GM12878 (cell line): ENCODE measurements at regions of chr9 and their contacts with region 1.

Region 1: DNA sequence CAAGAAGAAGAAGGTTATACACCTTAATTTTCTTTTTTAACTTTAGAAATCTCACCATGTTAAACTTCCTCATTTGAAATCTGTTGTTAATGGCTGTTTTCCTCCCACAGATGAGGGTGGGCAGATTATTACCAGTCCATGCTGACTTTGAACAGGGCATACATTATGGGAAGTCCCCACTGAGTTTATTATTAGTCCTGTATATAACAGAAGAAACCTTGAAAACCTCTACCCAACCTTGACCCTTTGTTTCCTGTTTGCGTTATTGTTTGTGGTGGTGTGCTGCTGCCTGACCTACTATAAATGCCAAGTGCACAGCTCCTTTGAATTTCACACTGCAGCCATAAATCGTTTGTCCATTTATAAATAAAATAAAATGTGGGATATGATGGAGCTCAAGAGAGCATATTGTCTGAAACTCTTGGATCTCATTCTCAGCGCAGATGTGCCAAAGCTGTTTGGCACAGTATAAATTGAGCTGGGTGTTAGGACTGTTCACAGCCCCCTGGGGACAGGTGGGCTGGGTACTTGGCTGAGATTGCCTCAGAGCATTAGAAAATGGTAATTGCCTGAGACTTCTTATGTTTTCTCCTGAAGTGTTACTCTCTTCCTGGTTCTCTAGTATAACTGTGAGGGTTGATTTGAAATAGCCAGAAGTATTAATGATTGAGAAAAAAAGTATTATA is 139.6 kb downstream of the SPATA31D1 start:
- DNase-seq: no peak
- ATAC-seq: peak; percentile 85
- H3K4me3 ChIP-seq: no peak overlapping the region
- H3K27ac ChIP-seq: no peak overlapping the region
- H3K4me1 ChIP-seq: no peaks in the 10 kb centered on the region
- H3K27me3 ChIP-seq: no peaks in the 10 kb centered on the region
- CTCF ChIP-seq: no peak
- EP300 ChIP-seq: peak in 1 of 2 experiments; percentile 23; a peak in 1 of 4 replicates
- POLR2A ChIP-seq: no peak
- RAD21 ChIP-seq: no peak

Region 2: GRCh38 chr9:82117026-82117811 is 10.9 kb before region 1 on chr9:
- CTCF ChIA-PET with region 1: interaction called, 6 read pairs
- POLR2A ChIA-PET with region 1: interaction called, 5 read pairs
- RAD21 ChIA-PET with region 1: interaction called, 9 read pairs
- SMC1A ChIA-PET with region 1: interaction called, 21 read pairs
- in situ Hi-C with region 1: no loop called
- intact Hi-C with region 1: no loop called
- DNase-seq: no peak
- ATAC-seq: no peak
- H3K4me3 ChIP-seq: no peak overlapping the region
- H3K27ac ChIP-seq: no peak overlapping the region
- H3K4me1 ChIP-seq: no peaks in the 10 kb centered on the region
- H3K27me3 ChIP-seq: no peaks in the 10 kb centered on the region
- CTCF ChIP-seq: no peak
- EP300 ChIP-seq: no peak
- POLR2A ChIP-seq: no peak
- RAD21 ChIP-seq: no peak

Region 3: GRCh38 chr9:83093939-83094338 is 965.8 kb after region 1 on chr9:
- CTCF ChIA-PET with region 1: no interaction called
- POLR2A ChIA-PET with region 1: no interaction called
- RAD21 ChIA-PET with region 1: no interaction called
- SMC1A ChIA-PET with region 1: no interaction called
- in situ Hi-C with region 1: no loop called
- intact Hi-C with region 1: no loop called
- DNase-seq: no peak
- ATAC-seq: no peak
- H3K4me3 ChIP-seq: no peak overlapping the region
- H3K27ac ChIP-seq: no peak overlapping the region
- H3K4me1 ChIP-seq: no peaks in the 10 kb centered on the region
- H3K27me3 ChIP-seq: no peaks in the 10 kb centered on the region
- CTCF ChIP-seq: no peak
- EP300 ChIP-seq: no peak
- POLR2A ChIP-seq: no peak
- RAD21 ChIP-seq: no peak